ENCODE measurements at regions of chr17 and their contacts with region 1.

Region 1: DNA sequence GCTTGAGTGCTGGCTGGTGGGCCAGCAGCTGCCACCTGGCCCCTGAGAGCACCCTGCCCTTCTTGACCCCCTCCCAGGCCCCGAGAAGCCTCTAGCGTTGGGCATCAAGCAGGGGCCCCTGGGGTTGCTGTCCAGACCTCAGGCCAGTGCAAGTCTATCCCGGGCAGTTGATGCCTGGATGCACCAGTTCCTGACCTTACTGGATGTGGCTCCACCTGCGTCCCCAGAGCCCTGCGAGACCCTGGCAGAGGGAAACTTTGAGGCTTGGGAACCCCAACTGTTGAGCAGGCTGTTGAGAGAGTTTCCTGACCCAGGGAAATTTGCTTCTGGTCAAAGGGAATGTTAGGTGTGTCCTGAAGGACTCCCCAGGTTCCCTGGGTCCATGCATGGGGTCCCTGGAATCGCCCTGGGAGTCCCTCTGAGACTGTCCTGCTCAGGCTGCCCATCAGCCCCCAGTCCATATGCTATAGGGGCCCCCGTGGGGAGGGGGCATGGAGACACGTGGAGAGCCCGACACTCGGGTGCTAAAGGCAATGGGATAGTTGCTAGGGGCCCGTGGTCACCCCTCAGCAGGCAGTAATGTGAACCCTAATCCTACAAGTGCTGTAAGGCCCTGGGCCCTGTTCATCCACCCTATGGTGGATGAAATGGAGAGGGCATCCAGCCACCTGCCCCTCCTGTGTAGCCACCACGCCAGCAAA is 46.4 kb downstream of the RAB11FIP4 start:
- DNase-seq: no peak
- H3K4me3 ChIP-seq: no peak overlapping the region
- H3K27ac ChIP-seq: no peak overlapping the region
- H3K27me3 ChIP-seq: peaks cover 11% of the 10 kb centered on the region
- CTCF ChIP-seq: no peak

Region 2: GRCh38 chr17:31509095-31509804 is 71.4 kb after region 1 on chr17:
- CTCF ChIA-PET with region 1: interaction called, 11 read pairs
- POLR2A ChIA-PET with region 1: no interaction called
- DNase-seq: no peak
- H3K4me3 ChIP-seq: no peak overlapping the region
- H3K27ac ChIP-seq: no peak overlapping the region
- H3K27me3 ChIP-seq: peaks cover 10% of the 10 kb centered on the region
- CTCF ChIP-seq: no peak

Region 3: DNA sequence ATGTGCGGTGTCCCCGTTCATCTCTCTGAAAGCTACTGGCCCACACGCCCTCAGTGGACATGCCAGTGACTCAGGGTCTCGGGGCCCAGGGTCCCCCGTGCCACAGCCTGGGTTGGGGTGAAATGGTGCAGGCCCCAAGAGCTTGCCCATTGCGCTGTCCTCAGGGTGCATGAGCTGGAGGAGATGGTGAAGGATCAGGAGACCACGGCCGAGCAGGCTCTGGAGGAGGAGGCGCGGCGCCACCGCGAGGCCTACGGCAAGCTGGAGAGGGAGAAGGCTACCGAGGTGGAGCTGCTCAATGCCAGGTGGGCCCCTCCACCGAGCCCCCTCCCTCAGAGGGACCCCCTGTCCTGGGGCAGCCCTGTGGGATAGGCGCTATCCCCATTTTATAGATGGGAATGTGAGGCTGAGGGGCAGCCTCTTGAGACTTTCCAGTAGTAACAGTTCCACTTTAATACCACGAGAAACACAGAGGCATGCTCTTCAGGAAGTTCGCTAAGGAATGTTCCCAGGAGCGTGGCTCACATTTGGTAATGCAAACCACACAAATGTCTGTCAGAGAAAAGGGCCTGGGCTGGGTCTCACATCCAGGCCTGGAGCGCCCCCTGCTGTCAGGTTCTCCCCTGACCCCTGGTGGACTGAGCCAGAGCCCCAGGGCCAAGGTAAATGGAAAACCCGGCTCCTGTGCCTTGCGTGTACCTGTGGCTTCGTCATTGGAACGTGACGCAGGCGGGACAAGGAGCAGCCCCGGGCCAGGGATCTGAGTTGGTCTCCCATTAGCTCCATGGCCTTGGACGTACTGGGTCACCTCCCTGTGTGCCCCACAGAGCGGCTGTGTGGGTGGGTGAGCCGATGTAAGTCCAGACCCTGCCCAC is 87.3 kb after region 1 on chr17:
- CTCF ChIA-PET with region 1: interaction called, 29 read pairs
- POLR2A ChIA-PET with region 1: no interaction called
- DNase-seq: peak; percentile 83
- H3K4me3 ChIP-seq: no peak overlapping the region
- H3K27ac ChIP-seq: peak overlapping the region; percentile 52
- H3K27me3 ChIP-seq: no peaks in the 10 kb centered on the region
- CTCF ChIP-seq: peak; percentile 92

Measured in AG04450 (cell line).